OCI-LY7 (cell line): ENCODE measurements at regions of chr20 and their contacts with region 1.

Region 1: GRCh38 chr20:4633780-4634179 is 87.9 kb upstream of the PRND start:
- DNase-seq: no peak
- H3K4me3 ChIP-seq: no peak overlapping the region
- H3K27ac ChIP-seq: no peak overlapping the region
- H3K4me1 ChIP-seq: no peaks in the 10 kb centered on the region
- CTCF ChIP-seq: no peak

Region 2: DNA sequence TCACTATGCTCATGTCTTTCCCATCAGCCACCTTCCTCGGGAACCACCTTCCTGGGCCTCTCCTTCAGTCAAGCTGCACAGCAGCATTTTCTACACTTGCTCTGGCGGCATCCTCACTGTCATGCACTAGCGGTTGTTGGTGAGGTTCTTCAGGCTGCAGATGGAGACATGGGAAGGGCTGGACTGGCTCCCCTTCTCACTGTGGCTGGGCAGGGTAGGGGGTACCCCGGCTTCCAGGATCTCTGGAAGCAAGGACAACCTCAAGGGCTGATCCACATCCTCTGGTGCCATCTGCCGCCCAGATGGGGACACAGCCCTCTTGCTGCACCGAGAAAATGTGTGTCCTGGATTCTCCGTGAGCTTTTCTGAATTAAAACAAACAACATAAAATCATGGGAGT is 438.3 kb before region 1 on chr20:
- CTCF ChIA-PET with region 1: no interaction called
- POLR2A ChIA-PET with region 1: no interaction called
- intact Hi-C with region 1: no loop called
- DNase-seq: no peak
- H3K4me3 ChIP-seq: no peak overlapping the region
- H3K27ac ChIP-seq: no peak overlapping the region
- H3K4me1 ChIP-seq: no peaks in the 10 kb centered on the region
- CTCF ChIP-seq: no peak

Region 3: GRCh38 chr20:4573564-4574355 is 60.0 kb before region 1 on chr20:
- CTCF ChIA-PET with region 1: no interaction called
- POLR2A ChIA-PET with region 1: no interaction called
- intact Hi-C with region 1: no loop called
- DNase-seq: no peak
- H3K4me3 ChIP-seq: no peak overlapping the region
- H3K27ac ChIP-seq: no peak overlapping the region
- H3K4me1 ChIP-seq: no peaks in the 10 kb centered on the region
- CTCF ChIP-seq: no peak

Region 4: DNA sequence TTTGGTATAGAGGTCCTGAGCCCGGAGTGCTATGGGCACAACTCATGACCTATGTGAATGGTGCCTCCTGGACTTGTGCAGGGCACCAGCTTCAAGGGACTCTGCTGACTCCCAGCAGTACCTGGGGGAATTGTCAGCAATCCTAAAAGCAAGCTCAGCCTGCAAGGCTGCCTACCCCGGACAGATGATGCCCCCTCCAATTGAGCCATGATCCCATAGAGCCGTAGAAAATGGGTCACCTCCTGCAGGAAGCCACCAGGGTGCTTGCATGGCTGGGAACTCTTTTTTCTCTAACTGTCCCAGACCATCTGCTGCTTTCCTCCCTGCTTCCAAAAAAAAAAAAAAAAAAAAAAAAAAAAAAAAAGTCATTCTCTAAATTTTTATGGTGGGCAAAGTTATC is 75.1 kb after region 1 on chr20:
- CTCF ChIA-PET with region 1: no interaction called
- POLR2A ChIA-PET with region 1: interaction called, 10 read pairs
- intact Hi-C with region 1: no loop called
- DNase-seq: no peak
- H3K4me3 ChIP-seq: no peak overlapping the region
- H3K27ac ChIP-seq: no peak overlapping the region
- H3K4me1 ChIP-seq: no peaks in the 10 kb centered on the region
- CTCF ChIP-seq: no peak

Region 5: DNA sequence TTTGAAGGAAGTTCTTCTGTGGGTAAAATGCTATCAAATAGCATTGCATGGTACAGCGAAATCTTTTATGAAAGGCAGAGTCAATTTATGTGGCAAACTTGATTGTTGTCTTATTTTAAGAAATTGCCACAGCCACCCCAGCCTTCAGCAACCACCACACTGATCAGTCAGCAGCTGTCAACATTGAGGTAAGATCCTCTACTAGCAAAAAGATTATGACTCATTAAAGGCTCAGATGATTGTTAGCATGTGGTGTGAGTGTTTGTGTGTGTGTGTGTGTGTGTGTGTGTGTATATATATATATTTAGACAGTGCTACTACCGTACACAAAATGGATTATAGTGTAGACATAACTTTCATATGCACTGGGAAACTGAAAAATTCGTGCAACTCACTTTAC is 1392.3 kb after region 1 on chr20:
- CTCF ChIA-PET with region 1: no interaction called
- POLR2A ChIA-PET with region 1: interaction called, 11 read pairs
- intact Hi-C with region 1: no loop called
- DNase-seq: no peak
- H3K4me3 ChIP-seq: no peak overlapping the region
- H3K27ac ChIP-seq: no peak overlapping the region
- H3K4me1 ChIP-seq: no peaks in the 10 kb centered on the region
- CTCF ChIP-seq: no peak